Activated CD4-positive, alpha-beta T cell treated with anti-CD3 and anti-CD28 coated beads, Interleukin-2, amount 10 ng/mL, durations not matched to agents 24 days and 14 days (primary cell): ENCODE measurements at regions of chr17 and their contacts with region 1.

Region 1: DNA sequence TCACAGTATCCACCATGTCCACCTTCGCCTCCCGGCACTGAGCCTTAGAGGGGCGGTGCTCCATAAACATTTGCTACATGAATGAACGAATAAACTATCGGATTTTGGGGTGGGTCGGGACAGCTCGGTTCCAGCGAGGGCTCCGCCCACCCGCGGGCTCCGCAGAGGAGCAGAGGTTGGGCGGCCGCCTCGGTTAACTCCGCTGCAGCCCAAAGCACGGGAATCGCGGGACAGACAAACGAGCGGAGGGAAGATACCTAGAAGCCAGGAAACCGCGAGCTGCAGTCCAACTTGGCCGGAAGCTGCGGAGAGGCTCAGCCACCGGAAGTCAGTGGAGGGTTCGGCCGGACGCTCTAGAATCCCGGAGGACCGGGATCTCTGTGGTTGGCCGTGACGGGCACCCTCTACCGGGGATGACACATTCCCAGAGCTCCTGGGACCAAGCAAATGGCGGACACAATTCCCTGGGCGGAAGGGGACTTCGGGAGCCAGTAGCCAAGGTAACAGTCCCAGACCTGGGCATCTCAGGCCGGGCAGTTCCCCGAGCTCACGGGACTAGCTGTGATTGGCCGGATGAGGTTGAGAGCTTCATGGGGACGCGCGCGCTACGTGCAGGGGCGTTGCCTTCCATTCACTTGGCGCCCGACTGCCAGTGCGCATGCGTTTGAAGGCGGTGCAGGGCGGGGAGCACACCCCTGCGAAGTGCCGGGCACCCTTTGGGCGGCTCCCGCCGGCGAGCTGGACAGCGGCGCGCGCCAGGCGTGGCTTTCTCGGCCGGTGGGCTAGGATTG is 501 bp upstream of the MAPK7 start:
- DNase-seq: peak; percentile 99
- H3K4me3 Mint-ChIP-seq: peak overlapping the region; percentile 98
- H3K27ac Mint-ChIP-seq: peak overlapping the region; percentile 98
- H3K4me1 Mint-ChIP-seq: peaks cover 21% of the 10 kb centered on the region
- H3K27me3 Mint-ChIP-seq: no peaks in the 10 kb centered on the region

Region 2: GRCh38 chr17:19447085-19447583 is 69.3 kb after region 1 on chr17:
- intact Hi-C with region 1: loop called (anchors 5 kb)
- DNase-seq: peak; percentile 93
- H3K4me3 Mint-ChIP-seq: no peak overlapping the region
- H3K27ac Mint-ChIP-seq: peak overlapping the region; percentile 7
- H3K4me1 Mint-ChIP-seq: peaks cover 3% of the 10 kb centered on the region
- H3K27me3 Mint-ChIP-seq: peaks cover 24% of the 10 kb centered on the region

Region 3: DNA sequence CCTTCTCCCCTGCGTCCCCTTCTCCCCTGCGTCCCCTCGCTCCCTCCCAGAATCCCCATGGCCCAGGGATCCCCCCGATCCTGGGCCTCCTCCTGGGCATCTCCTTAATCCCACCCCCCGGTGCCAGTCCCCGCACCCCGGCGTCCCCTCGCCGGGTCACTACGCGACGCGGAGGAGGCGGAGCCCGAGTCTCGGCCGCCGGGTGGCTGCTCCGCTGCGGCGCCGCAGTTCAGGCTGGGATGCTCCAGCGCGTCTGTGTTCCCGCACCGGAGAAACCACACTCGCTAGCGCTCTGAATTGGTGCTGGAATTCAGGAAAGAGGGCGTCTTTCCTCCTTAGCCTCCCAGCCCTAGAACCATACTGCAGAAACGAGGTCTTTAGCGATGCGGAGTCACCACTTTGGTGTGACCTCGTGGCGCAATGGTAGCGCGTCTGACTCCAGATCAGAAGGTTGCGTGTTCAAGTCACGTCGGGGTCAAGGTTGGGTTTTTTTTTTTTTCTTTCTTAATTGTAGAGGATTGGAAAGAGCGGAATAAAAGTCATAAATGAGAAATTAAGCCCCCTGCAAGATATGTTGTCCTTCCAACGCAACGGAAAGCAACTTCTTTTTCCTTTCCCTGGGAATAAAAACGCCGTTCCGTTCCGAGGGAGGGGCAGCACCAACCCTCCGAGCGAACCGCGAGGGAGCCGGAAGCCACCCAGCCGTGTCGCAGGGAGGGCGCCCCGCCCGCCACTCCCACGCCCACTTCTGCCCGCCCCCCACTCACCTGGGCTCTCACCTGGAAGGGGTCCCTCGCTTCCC is 130.2 kb after region 1 on chr17:
- intact Hi-C with region 1: loop called (anchors 1 kb)
- DNase-seq: peak; percentile 95
- H3K4me3 Mint-ChIP-seq: peak overlapping the region; percentile 86
- H3K27ac Mint-ChIP-seq: peak overlapping the region; percentile 86
- H3K4me1 Mint-ChIP-seq: peaks cover 7% of the 10 kb centered on the region
- H3K27me3 Mint-ChIP-seq: peaks cover 17% of the 10 kb centered on the region

Region 4: DNA sequence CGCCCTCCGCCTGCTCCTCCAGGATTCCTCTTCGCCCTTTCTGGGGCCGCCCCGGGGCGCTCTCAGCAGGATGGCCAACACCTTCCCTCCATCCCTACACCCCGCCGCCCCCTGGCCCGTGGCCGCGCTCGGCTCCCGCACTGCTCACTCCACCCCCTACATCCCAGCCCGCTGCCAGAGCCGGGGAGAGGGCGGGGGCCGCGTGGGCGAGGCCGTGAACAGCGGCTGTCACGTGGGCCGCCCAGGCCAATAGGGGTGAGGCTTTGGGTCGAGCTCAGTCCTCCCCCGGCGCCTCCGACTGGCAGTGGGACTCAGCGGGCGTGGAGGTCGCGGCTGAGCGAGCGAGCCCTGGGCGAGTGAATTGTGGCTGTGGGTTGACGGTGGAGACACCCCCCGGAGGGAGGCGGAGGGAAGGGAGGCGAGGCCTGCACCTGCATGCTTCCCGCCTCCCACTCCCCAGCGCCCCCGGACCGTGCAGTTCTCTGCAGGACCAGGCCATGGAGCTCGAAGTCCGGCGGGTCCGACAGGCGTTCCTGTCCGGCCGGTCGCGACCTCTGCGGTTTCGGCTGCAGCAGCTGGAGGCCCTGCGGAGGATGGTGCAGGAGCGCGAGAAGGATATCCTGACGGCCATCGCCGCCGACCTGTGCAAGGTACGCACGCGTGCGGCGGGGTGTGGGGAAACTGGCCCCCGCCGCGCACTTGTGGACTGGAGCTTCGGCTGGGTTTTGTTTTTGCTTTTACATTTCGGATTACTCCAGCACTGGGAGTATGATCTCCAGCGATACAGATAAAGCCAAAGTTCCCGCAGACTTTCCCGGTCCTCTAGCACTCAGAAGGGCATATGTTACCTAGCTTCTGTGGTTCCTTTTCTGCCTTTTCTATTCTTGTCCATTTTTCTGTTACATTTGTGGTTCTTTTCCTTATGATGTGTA is 270.9 kb after region 1 on chr17 and contains the start of gene ALDH3A2:
- intact Hi-C with region 1: loop called (anchors 1 kb)
- DNase-seq: peak; percentile 98
- H3K4me3 Mint-ChIP-seq: peak within 1 kb of the TSS; percentile 89
- H3K27ac Mint-ChIP-seq: peak within 1 kb of the TSS; percentile 91
- H3K4me1 Mint-ChIP-seq: peaks cover 36% of the 10 kb centered on the region
- H3K27me3 Mint-ChIP-seq: peaks cover 9% of the 10 kb centered on the region
- total RNA-seq, gene ALDH3A2: 32.8 and 34.3 TPM in 2 replicates